OCI-LY7 (cell line): ENCODE measurements at regions of chr2 and their contacts with region 1.

Region 1: GRCh38 chr2:71545572-71546274 is 92.4 kb downstream of the DYSF start:
- DNase-seq: peak; percentile 68
- H3K4me3 ChIP-seq: peak overlapping the region; percentile 9
- H3K27ac ChIP-seq: no peak overlapping the region
- H3K4me1 ChIP-seq: peaks cover 4% of the 10 kb centered on the region
- CTCF ChIP-seq: peak; percentile 90

Region 2: GRCh38 chr2:71637168-71637567 is 91.4 kb after region 1 on chr2:
- CTCF ChIA-PET with region 1: no interaction called
- POLR2A ChIA-PET with region 1: no interaction called
- intact Hi-C with region 1: no loop called
- DNase-seq: no peak
- H3K4me3 ChIP-seq: no peak overlapping the region
- H3K27ac ChIP-seq: no peak overlapping the region
- H3K4me1 ChIP-seq: no peaks in the 10 kb centered on the region
- CTCF ChIP-seq: no peak

Region 3: DNA sequence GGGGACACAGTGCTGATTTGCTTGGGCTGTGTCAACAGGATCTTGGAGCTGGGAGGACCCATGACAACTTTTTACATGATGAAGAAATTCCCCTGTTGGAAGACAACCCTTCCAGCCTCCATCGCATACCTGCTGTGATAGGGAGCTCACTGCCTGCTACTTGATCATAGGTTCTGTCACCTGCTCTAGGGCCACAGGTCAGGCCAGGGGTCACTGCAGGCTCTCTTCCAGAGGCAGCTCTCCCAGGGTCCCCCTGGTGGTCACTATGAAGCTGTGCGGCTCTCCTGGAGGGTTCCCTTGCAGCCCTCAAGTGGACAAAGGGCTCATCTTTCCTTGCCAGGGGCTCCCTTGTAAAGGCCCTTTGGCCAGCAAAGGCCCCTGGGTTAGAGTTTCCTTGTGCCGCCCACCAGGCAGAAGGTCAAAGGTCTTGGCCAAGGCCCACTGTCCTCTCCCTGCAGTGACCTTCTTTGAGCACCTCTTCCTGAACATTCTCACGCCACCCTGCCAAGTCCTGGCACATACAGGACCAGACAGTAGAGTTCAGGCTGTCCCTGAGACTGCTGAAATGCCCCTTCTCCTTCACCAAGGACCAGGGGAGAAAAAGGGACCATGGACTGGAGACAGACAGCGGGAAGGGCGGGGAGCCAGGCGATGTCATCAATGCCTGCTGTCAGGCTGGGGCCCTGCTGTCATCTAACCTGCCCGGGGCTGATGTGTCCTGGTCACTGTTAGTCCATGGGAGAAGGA is 252.7 kb after region 1 on chr2:
- CTCF ChIA-PET with region 1: no interaction called
- POLR2A ChIA-PET with region 1: no interaction called
- intact Hi-C with region 1: loop called (anchors 1 kb)
- DNase-seq: peak; percentile 15
- H3K4me3 ChIP-seq: no peak overlapping the region
- H3K27ac ChIP-seq: no peak overlapping the region
- H3K4me1 ChIP-seq: no peaks in the 10 kb centered on the region
- CTCF ChIP-seq: peak; percentile 66

Region 4: DNA sequence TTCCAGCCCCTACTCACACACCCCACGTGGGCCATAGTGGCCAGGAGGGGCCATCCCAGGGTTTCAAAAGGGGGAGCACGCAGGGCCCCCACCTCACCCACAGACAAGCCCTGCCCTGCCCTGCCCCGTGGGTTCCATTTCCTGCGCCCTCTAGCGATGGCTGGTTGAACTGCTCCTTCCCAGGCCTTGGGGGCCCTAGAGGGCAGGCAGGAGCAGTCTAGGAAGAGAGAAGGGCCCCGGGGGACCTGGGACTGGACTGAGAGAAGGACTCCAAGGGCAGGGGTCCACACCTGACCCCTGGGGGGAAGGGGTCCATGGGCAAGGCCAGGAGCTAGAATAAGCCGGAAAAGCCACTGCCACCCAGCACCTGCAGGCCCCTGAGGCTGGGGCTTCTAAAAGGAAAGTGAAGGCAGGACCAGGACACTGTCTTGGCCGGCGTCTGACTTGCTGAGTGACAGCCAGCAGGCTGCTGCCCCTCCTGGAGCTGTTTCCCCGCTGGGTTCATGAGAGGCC is 591.8 kb after region 1 on chr2:
- CTCF ChIA-PET with region 1: no interaction called
- POLR2A ChIA-PET with region 1: no interaction called
- intact Hi-C with region 1: loop called (anchors 5 kb)
- DNase-seq: peak; percentile 51
- H3K4me3 ChIP-seq: no peak overlapping the region
- H3K27ac ChIP-seq: no peak overlapping the region
- H3K4me1 ChIP-seq: no peaks in the 10 kb centered on the region
- CTCF ChIP-seq: peak; percentile 88

Region 5: GRCh38 chr2:72150157-72150865 is 604.6 kb after region 1 on chr2:
- CTCF ChIA-PET with region 1: no interaction called
- POLR2A ChIA-PET with region 1: no interaction called
- intact Hi-C with region 1: loop called (anchors 2 kb)
- DNase-seq: peak; percentile 40
- H3K4me3 ChIP-seq: no peak overlapping the region
- H3K27ac ChIP-seq: no peak overlapping the region
- H3K4me1 ChIP-seq: no peaks in the 10 kb centered on the region
- CTCF ChIP-seq: peak; percentile 79

Region 6: DNA sequence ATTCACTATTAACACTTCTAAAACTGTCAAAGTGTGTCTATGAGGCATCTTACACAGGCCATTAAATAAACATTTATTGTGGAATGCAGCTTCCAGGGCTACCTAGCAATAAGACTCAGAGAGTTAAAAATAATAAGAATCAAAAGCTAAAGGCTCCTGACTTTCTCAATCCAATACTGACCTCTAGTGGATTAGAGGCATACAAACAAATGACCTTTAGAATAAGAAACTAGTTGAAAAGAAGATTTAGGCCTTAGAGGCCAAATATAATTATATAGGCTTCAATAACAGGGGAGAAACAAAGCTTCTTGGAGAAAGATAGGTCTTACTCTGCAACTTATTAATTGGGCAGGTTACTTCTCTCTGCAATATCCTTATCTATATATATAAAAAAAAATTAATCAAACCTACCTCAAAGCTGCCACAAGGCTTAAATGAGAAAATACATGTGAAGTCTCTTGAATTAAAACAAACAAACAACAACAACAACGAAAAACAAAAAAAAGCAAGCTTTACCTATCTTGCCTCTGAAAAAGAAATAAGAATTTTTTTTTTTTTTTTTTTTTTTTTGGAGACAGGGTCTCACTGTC is 1034.0 kb after region 1 on chr2:
- CTCF ChIA-PET with region 1: no interaction called
- POLR2A ChIA-PET with region 1: no interaction called
- intact Hi-C with region 1: loop called (anchors 5 kb)
- DNase-seq: peak; percentile 44
- H3K4me3 ChIP-seq: no peak overlapping the region
- H3K27ac ChIP-seq: no peak overlapping the region
- H3K4me1 ChIP-seq: no peaks in the 10 kb centered on the region
- CTCF ChIP-seq: peak; percentile 87